Gastrocnemius medialis (tissue), 4 donors: ENCODE measurements at regions of chr5 and their contacts with region 1.

Region 1: DNA sequence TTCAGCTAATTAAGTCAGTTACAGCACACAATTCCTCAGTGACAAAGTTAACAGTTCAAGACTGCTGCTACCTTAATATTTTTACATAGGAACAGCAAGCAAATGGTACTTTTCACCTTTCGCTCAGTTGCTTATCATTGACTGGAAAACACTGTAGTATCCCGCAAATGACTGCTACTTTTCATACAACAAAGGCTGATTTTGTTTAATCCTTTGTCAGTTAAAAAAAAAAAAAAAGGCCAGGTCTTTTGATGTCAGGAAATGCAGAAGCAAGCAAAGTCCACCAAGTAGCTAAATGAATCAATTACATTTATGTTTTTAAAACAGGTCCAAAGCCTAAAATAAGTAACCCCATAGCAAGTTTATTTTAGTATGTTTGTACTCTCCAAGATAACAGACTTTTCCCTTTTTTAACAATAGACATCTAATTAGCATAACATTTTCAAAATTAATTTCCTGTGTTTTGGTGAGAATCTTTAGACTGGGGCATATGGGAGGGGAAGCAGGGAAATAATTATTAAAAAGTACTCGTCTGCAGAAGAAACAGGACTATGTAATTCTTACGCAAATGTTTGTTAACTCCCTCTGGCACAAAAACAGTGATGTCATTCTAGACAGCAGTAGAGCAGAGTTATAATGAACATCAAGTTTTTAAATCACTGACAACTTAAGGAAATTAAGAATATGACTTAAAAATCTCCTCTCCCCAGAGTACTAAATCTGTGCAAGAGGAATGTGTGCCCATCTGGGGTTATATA is 9.6 kb downstream of the PFDN1 start:
- DNase-seq: no peak
- ATAC-seq: no peak
- H3K4me3 ChIP-seq: no peak overlapping the region
- H3K27ac ChIP-seq: peak overlapping the region; percentile 77 to 88 (median 80)
- H3K4me1 ChIP-seq: peaks cover 80 to 87% of the 10 kb centered on the region in 2 donors
- H3K27me3 ChIP-seq: no peaks in the 10 kb centered on the region
- CTCF ChIP-seq: no peak
- POLR2A ChIP-seq: no peak

Region 2: GRCh38 chr5:140261403-140262171 is 31.7 kb before region 1 on chr5:
- in situ Hi-C with region 1: no loop called
- intact Hi-C with region 1: loop called (anchors 2 kb)
- DNase-seq: peak; percentile 85 to 89
- ATAC-seq: peak; percentile 97 to 98
- H3K4me3 ChIP-seq: peak overlapping the region; percentile 21 to 32 (median 28)
- H3K27ac ChIP-seq: peak overlapping the region; percentile 86 to 95 (median 89)
- H3K4me1 ChIP-seq: peaks cover 31 to 60% of the 10 kb centered on the region in 2 donors
- H3K27me3 ChIP-seq: no peaks in the 10 kb centered on the region
- CTCF ChIP-seq: no peak
- POLR2A ChIP-seq: peak in 1 of 2 donors; percentile 6

Region 3: DNA sequence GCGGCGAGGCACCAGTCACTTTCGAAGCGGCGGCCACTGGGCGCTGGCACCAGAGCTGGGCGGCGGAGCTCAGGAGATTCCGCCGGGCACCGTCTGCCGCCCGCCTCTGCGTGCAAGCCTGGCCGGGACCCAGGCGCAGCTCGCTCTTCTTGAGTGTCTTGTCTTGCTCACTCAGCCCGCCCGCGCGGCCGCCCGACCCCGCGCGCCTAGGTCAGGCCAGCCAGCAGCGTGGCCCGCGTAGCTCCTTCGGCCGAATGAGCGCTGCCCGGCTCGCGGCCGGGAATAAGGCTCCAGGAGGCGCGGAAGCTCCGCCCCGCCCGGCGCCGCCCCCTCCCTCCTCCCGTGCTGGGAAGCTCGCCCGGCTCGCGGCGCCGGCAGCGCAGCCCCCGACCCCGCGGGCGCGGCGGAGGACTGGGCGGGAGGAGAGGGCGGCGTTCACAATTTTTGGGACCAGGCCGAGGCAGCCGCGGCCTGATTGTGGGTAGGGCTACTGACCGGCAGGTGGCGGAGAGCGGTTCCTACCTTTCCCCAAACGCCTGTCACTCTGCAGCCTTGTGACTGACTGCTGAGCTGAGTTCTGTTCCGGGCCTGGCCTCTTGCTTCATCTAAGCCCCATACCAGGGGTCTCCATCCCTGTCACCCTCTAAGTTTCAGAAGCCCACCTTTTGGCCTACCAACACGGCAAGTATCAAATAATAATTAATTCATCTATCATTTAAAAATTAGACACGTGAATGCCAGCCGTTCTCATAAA is 53.3 kb after region 1 on chr5 and contains the start of gene HBEGF:
- in situ Hi-C with region 1: no loop called
- intact Hi-C with region 1: loop called (anchors 2 kb)
- DNase-seq: peak; percentile 82 to 88
- ATAC-seq: peak; percentile 69 to 71
- H3K4me3 ChIP-seq: peak within 1 kb of the TSS; percentile 75 to 98 (median 78)
- H3K27ac ChIP-seq: peak within 1 kb of the TSS; percentile 91 to 97 (median 94)
- H3K4me1 ChIP-seq: peaks cover 56 to 57% of the 10 kb centered on the region in 2 donors
- H3K27me3 ChIP-seq: no peaks in the 10 kb centered on the region
- CTCF ChIP-seq: peak; percentile 46 to 73 (median 60)
- POLR2A ChIP-seq: peak; percentile 90 to 97
- total RNA-seq, gene HBEGF: 5.3 to 22.2 (median 17.6) TPM

Region 4: DNA sequence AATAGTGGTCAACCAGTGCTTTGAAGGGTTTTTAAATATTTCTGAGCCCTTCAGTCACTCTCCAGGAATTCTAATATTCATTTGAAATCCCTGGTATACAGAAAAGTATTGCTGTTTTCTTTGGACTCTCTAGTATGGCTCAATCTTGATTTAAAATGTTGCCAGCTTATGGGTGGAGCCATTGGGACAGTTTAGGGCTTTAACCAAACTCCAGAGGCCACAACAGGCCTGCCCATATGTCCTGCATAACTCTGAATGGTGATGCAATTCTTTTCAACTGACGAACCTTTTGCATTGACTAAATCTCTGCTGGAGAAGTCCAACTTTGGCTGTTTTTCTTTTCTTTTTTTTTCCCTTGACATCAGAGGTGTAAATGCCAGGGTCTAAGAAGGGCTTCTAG is 98.0 kb after region 1 on chr5:
- in situ Hi-C with region 1: no loop called
- intact Hi-C with region 1: no loop called
- DNase-seq: no peak
- ATAC-seq: no peak
- H3K4me3 ChIP-seq: no peak overlapping the region
- H3K27ac ChIP-seq: no peak overlapping the region
- H3K4me1 ChIP-seq: no peaks in the 10 kb centered on the region
- H3K27me3 ChIP-seq: no peaks in the 10 kb centered on the region
- CTCF ChIP-seq: no peak
- POLR2A ChIP-seq: no peak

Region 5: GRCh38 chr5:140547508-140548299 is 254.4 kb after region 1 on chr5 and contains the start of gene EIF4EBP3:
- in situ Hi-C with region 1: no loop called
- intact Hi-C with region 1: no loop called
- DNase-seq: peak; percentile 96 to 98
- ATAC-seq: peak; percentile 71 to 75
- H3K4me3 ChIP-seq: peak within 1 kb of the TSS; percentile 54 to 79 (median 78)
- H3K27ac ChIP-seq: peak within 1 kb of the TSS; percentile 92 to 100 (median 100)
- H3K4me1 ChIP-seq: peaks cover 46 to 52% of the 10 kb centered on the region in 2 donors
- H3K27me3 ChIP-seq: no peaks in the 10 kb centered on the region
- CTCF ChIP-seq: peak; percentile 64 to 95 (median 80)
- POLR2A ChIP-seq: peak; percentile 92 to 98
- total RNA-seq, gene EIF4EBP3: 38.6 to 118 (median 51.8) TPM